Thyroid gland (tissue), 4 donors: ENCODE measurements at regions of chr3 and their contacts with region 1.

Region 1: DNA sequence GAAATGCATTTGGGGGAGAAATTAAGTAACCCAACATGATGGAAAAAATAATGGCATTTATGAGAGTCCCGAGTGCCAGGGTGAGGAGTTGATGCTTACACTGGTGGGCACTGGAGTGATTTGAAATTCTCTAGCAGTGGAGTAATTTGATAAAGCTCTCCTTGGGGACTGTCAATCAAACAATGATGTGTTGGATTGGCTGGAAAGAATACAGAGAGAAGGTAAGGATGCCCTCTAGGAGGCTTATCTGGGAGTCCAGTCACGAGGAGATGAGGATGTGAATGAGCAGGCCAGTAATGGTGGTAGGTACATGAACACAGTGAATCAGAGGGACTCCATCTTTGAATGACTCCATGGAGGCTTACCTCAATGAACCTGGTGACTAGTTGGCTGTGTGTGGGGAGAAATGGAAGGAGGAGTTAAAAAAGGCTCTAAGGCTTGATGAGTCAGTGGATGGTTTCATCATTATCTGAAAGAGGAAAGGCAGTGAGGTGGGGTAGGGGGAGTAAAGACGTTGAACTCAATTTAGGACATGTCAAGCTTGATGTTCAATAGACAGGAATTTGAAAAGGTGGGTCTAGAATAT is 61.0 kb downstream of the KCNAB1 start:
- DNase-seq: no peak
- H3K4me3 ChIP-seq: no peak overlapping the region
- H3K27ac ChIP-seq: no peak overlapping the region
- H3K4me1 ChIP-seq: no peaks in the 10 kb centered on the region
- H3K27me3 ChIP-seq: no peaks in the 10 kb centered on the region
- CTCF ChIP-seq: no peak
- POLR2A ChIP-seq: no peak

Region 2: GRCh38 chr3:156233876-156234275 is 52.5 kb after region 1 on chr3:
- intact Hi-C with region 1: loop called (anchors 10 kb)
- DNase-seq: no peak
- H3K4me3 ChIP-seq: no peak overlapping the region
- H3K27ac ChIP-seq: no peak overlapping the region
- H3K4me1 ChIP-seq: no peaks in the 10 kb centered on the region
- H3K27me3 ChIP-seq: no peaks in the 10 kb centered on the region
- CTCF ChIP-seq: no peak
- POLR2A ChIP-seq: no peak

Region 3: GRCh38 chr3:156334841-156335564 is 153.6 kb after region 1 on chr3:
- intact Hi-C with region 1: no loop called
- DNase-seq: no peak
- H3K4me3 ChIP-seq: no peak overlapping the region
- H3K27ac ChIP-seq: no peak overlapping the region
- H3K4me1 ChIP-seq: no peaks in the 10 kb centered on the region
- H3K27me3 ChIP-seq: no peaks in the 10 kb centered on the region
- CTCF ChIP-seq: no peak
- POLR2A ChIP-seq: no peak

Region 4: GRCh38 chr3:156356537-156357363 is 175.3 kb after region 1 on chr3:
- intact Hi-C with region 1: no loop called
- DNase-seq: no peak
- H3K4me3 ChIP-seq: no peak overlapping the region
- H3K27ac ChIP-seq: peak overlapping the region in 2 of 3 donors; percentile 48 to 61
- H3K4me1 ChIP-seq: peaks cover 5 to 18% of the 10 kb centered on the region in 2 donors
- H3K27me3 ChIP-seq: no peaks in the 10 kb centered on the region
- CTCF ChIP-seq: no peak
- POLR2A ChIP-seq: no peak